Activated CD4-positive, alpha-beta memory T cell treated with anti-CD3 and anti-CD28 coated beads for 36 hours (primary cell): ENCODE measurements at regions of chr2 and their contacts with region 1.

Region 1: GRCh38 chr2:3303583-3304406 is 73.8 kb downstream of the EIPR1 start:
- DNase-seq: peak; percentile 90
- H3K4me3 Mint-ChIP-seq: peak overlapping the region; percentile 37
- H3K27ac Mint-ChIP-seq: peak overlapping the region; percentile 42
- H3K4me1 Mint-ChIP-seq: peaks cover 20% of the 10 kb centered on the region
- H3K27me3 Mint-ChIP-seq: no peaks in the 10 kb centered on the region

Region 2: GRCh38 chr2:3179208-3179607 is 124.6 kb before region 1 on chr2:
- CTCF ChIA-PET with region 1: interaction called, 3 read pairs
- POLR2A ChIA-PET with region 1: no interaction called
- intact Hi-C with region 1: loop called (anchors 1 kb)
- DNase-seq: peak; percentile 37
- H3K4me3 Mint-ChIP-seq: no peak overlapping the region
- H3K27ac Mint-ChIP-seq: no peak overlapping the region
- H3K4me1 Mint-ChIP-seq: no peaks in the 10 kb centered on the region
- H3K27me3 Mint-ChIP-seq: no peaks in the 10 kb centered on the region

Region 3: GRCh38 chr2:3198119-3198518 is 105.7 kb before region 1 on chr2:
- CTCF ChIA-PET with region 1: interaction called, 12 read pairs
- POLR2A ChIA-PET with region 1: no interaction called
- intact Hi-C with region 1: loop called (anchors 1 kb)
- DNase-seq: peak; percentile 68
- H3K4me3 Mint-ChIP-seq: peak overlapping the region; percentile 40
- H3K27ac Mint-ChIP-seq: peak overlapping the region; percentile 78
- H3K4me1 Mint-ChIP-seq: peaks cover 14% of the 10 kb centered on the region
- H3K27me3 Mint-ChIP-seq: no peaks in the 10 kb centered on the region